ENCODE measurements at regions of chr9 and their contacts with region 1.

Region 1: DNA sequence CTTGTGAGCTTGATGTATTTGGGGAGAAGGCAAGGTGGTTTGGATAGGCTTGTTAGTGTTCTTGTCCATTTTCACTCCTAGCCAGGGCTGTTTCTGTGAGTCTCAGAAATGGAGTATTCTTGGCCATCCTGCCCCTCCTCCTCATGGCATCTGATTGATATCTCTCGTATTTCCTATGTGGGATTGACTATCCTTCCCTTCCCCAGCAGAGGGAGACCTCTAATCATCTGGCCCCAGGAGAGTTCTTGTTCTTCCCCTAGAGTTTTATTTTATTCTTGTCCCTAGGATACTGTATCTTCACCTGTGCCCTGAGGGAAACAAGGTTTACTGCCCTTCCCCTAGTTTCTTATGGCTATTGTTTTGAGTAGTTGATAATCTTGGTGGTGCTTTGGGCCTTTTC is 114.4 kb downstream of the VPS13A start:
- DNase-seq: peak; percentile 43
- H3K4me3 ChIP-seq: no peak overlapping the region
- H3K27ac ChIP-seq: no peak overlapping the region
- H3K4me1 ChIP-seq: no peaks in the 10 kb centered on the region
- H3K27me3 ChIP-seq: no peaks in the 10 kb centered on the region
- CTCF ChIP-seq: peak; percentile 47 to 48
- POLR2A ChIP-seq: no peak

Region 2: GRCh38 chr9:77133011-77133410 is 158.7 kb before region 1 on chr9:
- CTCF ChIA-PET with region 1: no interaction called
- POLR2A ChIA-PET with region 1: no interaction called
- dilution Hi-C with region 1: no loop called
- intact Hi-C with region 1: no loop called
- DNase-seq: no peak
- H3K4me3 ChIP-seq: no peak overlapping the region
- H3K27ac ChIP-seq: no peak overlapping the region
- H3K4me1 ChIP-seq: no peaks in the 10 kb centered on the region
- H3K27me3 ChIP-seq: peaks cover 2 to 4% of the 10 kb centered on the region in 2 experiments
- CTCF ChIP-seq: no peak
- POLR2A ChIP-seq: no peak

Region 3: GRCh38 chr9:77417566-77417965 is 125.9 kb after region 1 on chr9:
- CTCF ChIA-PET with region 1: interaction called, 16 read pairs
- POLR2A ChIA-PET with region 1: no interaction called
- dilution Hi-C with region 1: no loop called
- intact Hi-C with region 1: no loop called
- DNase-seq: peak; percentile 72
- H3K4me3 ChIP-seq: no peak overlapping the region
- H3K27ac ChIP-seq: peak overlapping the region; percentile 24
- H3K4me1 ChIP-seq: peaks cover 45% of the 10 kb centered on the region
- H3K27me3 ChIP-seq: no peaks in the 10 kb centered on the region
- CTCF ChIP-seq: no peak
- POLR2A ChIP-seq: no peak

Region 4: GRCh38 chr9:77449255-77450039 is 157.7 kb after region 1 on chr9:
- CTCF ChIA-PET with region 1: interaction called, 13 read pairs
- POLR2A ChIA-PET with region 1: no interaction called
- dilution Hi-C with region 1: no loop called
- intact Hi-C with region 1: loop called (anchors 2 kb)
- DNase-seq: peak; percentile 22
- H3K4me3 ChIP-seq: no peak overlapping the region
- H3K27ac ChIP-seq: no peak overlapping the region
- H3K4me1 ChIP-seq: no peaks in the 10 kb centered on the region
- H3K27me3 ChIP-seq: no peaks in the 10 kb centered on the region
- CTCF ChIP-seq: peak in 1 of 2 donors; percentile 7
- POLR2A ChIP-seq: no peak